Activated CD4-positive, alpha-beta T cell treated with anti-CD3 and anti-CD28 coated beads, Interleukin-2, amount 10 ng/mL, durations not matched to agents 7 days and 5 days (primary cell): ENCODE measurements at regions of chr11 and their contacts with region 1.

Region 1: DNA sequence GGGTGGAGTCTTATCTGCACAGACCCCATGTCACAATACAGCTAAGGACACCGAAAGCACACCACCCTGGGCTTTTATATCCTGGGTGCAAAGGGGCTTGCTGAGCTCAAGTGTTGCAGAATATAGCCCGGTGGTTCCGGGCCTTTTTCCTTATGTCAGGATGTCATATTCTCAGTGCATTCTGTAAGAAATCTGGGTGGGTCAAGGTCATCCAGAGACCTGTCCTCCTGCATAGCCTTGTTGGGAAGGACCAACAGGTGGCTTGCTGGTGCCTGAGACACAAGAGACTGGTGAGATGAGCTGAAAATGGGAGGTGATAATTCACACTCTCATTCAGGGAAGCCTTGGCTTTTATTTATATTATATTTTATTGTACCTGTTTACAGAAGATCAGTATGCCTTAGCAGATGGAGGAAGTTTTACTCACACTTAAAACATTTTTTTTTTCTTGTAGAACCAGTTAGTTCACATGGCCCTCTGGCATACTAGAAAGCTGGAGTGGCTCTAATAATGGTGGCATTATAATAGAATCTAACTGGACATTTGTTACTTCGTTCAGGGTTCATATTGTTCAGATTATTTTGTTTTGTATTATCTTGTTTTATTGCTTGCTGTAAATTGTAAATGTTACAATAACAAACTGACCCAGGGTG is 14.6 kb upstream of the TMEM123 start:
- DNase-seq: no peak
- H3K4me3 Mint-ChIP-seq: no peak overlapping the region
- H3K27ac Mint-ChIP-seq: no peak overlapping the region
- H3K4me1 Mint-ChIP-seq: peaks cover 91% of the 10 kb centered on the region
- H3K27me3 Mint-ChIP-seq: no peaks in the 10 kb centered on the region

Region 2: GRCh38 chr11:102007567-102008437 is 459.4 kb before region 1 on chr11:
- CTCF ChIA-PET with region 1: no interaction called
- POLR2A ChIA-PET with region 1: no interaction called
- DNase-seq: no peak
- H3K4me3 Mint-ChIP-seq: no peak overlapping the region
- H3K27ac Mint-ChIP-seq: no peak overlapping the region
- H3K4me1 Mint-ChIP-seq: no peaks in the 10 kb centered on the region
- H3K27me3 Mint-ChIP-seq: peaks cover 16% of the 10 kb centered on the region

Region 3: DNA sequence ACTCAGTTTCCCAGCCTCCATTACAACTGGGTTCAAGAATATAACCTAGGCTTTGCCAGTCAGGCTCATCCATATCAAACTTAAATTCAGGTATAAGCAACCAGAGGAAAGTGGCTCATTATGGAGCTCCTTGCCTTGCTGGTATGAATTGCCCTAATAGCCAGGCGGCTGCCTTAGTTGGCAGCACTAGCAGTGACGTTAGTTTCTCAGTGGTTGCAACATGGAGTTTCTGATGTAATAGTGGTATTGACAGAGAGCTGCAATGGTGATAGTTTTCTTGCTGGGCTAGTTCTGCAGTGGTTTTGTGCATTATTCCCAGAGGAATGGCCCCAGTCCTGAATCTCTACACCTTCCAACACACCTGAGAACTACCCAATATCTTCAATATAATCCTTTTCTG is 10.8 kb before region 1 on chr11:
- CTCF ChIA-PET with region 1: interaction called, 14 read pairs
- POLR2A ChIA-PET with region 1: no interaction called
- DNase-seq: no peak
- H3K4me3 Mint-ChIP-seq: no peak overlapping the region
- H3K27ac Mint-ChIP-seq: no peak overlapping the region
- H3K4me1 Mint-ChIP-seq: peaks cover 71% of the 10 kb centered on the region
- H3K27me3 Mint-ChIP-seq: no peaks in the 10 kb centered on the region